Spleen (tissue), 13 donors: ENCODE measurements at regions of chr17 and their contacts with region 1.

Region 1: GRCh38 chr17:17356149-17356930 is 53.2 kb downstream of the NT5M start:
- DNase-seq: peak; percentile 83
- H3K4me3 ChIP-seq: no peak overlapping the region
- H3K27ac ChIP-seq: no peak overlapping the region
- H3K4me1 ChIP-seq: peaks cover 0 to 34% (median 10%) of the 10 kb centered on the region in 6 donors
- H3K27me3 ChIP-seq: no peaks in the 10 kb centered on the region
- CTCF ChIP-seq: peak; percentile 93 to 99 (median 97)
- POLR2A ChIP-seq: no peak

Region 2: GRCh38 chr17:17303010-17303846 is 53.1 kb before region 1 on chr17 and contains the start of gene NT5M:
- intact Hi-C with region 1: no loop called
- DNase-seq: peak; percentile 95
- H3K4me3 ChIP-seq: peak within 1 kb of the TSS; percentile 12 to 89 (median 53)
- H3K27ac ChIP-seq: peak within 1 kb of the TSS in 7 of 8 donors; percentile 22 to 84 (median 61)
- H3K4me1 ChIP-seq: peaks cover 18 to 55% (median 43%) of the 10 kb centered on the region in 6 donors
- H3K27me3 ChIP-seq: peaks cover 0 to 9% (median 0%) of the 10 kb centered on the region in 7 donors
- CTCF ChIP-seq: no peak
- POLR2A ChIP-seq: no peak
- total RNA-seq, gene NT5M: 1.9 to 3.6 (median 2.8) TPM

Region 3: DNA sequence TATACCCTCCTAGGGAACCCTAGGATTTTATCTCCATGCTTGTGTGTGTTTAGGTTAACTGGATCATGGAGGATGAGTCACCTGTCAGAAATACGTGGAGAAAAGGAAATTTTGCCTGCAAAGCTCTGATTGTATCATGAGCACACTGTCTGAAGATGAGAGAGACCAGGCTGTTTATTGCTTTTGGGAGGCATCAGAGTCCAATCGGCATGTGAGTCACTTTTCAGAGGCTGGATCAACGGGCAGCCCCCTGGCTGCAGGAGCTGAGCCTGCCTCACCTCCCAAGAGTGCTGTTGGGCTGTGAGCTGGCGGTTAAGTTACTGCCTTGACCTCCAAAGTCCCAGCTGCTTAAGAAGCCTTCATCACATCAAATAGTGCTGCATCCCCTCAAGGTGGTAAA is 79.0 kb after region 1 on chr17:
- intact Hi-C with region 1: loop called (anchors 5 kb)
- DNase-seq: no peak
- H3K4me3 ChIP-seq: no peak overlapping the region
- H3K27ac ChIP-seq: no peak overlapping the region
- H3K4me1 ChIP-seq: peaks cover 0 to 15% (median 3%) of the 10 kb centered on the region in 6 donors
- H3K27me3 ChIP-seq: no peaks in the 10 kb centered on the region
- CTCF ChIP-seq: no peak
- POLR2A ChIP-seq: no peak

Region 4: DNA sequence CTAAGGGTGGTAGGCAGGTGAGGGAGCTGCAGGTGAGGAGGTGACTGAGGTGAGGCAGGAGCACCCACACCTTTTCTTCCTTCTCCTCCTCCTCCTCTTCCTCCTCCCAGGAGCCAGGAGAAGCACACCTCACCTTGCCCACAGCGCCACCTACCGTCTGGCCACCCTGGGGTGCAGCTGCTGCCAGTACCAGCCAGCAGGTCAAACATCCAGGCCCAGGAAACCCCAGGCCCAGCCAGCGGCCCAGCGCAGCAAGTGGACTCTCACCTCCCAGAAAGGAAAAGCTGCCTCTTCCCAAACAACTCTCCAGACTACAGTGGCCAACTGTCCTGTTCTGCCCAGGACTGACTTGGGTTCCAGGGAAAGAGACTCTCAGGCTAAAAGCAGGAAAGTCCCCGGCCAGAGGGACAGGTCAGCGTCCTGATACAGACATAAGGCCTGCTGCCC is 212.4 kb after region 1 on chr17:
- intact Hi-C with region 1: loop called (anchors 5 kb)
- DNase-seq: peak; percentile 85
- H3K4me3 ChIP-seq: no peak overlapping the region
- H3K27ac ChIP-seq: no peak overlapping the region
- H3K4me1 ChIP-seq: peaks cover 0 to 52% (median 17%) of the 10 kb centered on the region in 6 donors
- H3K27me3 ChIP-seq: no peaks in the 10 kb centered on the region
- CTCF ChIP-seq: peak; percentile 14 to 78 (median 61)
- POLR2A ChIP-seq: no peak

Region 5: GRCh38 chr17:17641621-17642409 is 285.5 kb after region 1 on chr17:
- intact Hi-C with region 1: loop called (anchors 2 kb)
- DNase-seq: peak; percentile 92
- H3K4me3 ChIP-seq: no peak overlapping the region
- H3K27ac ChIP-seq: no peak overlapping the region
- H3K4me1 ChIP-seq: peaks cover 0 to 20% (median 4%) of the 10 kb centered on the region in 6 donors
- H3K27me3 ChIP-seq: peaks cover 0 to 5% (median 0%) of the 10 kb centered on the region in 7 donors
- CTCF ChIP-seq: peak; percentile 88 to 97 (median 94)
- POLR2A ChIP-seq: no peak